ENCODE measurements at regions of chr15 and their contacts with region 1.

Region 1: GRCh38 chr15:52078876-52079700 is 33.5 kb downstream of the BCL2L10 start:
- DNase-seq: peak; percentile 70 to 84 (median 72)
- ATAC-seq: peak; percentile 94
- H3K4me3 ChIP-seq: no peak overlapping the region
- H3K27ac ChIP-seq: no peak overlapping the region
- H3K4me1 ChIP-seq: peaks cover 0 to 9% of the 10 kb centered on the region in 2 experiments; a peak in 3 of 5 replicates
- H3K27me3 ChIP-seq: peaks cover 0 to 3% of the 10 kb centered on the region in 2 experiments; a peak in 2 of 5 replicates
- CTCF ChIP-seq: peak; percentile 84 to 89 (median 85)
- EP300 ChIP-seq: no peak
- POLR2A ChIP-seq: no peak
- RAD21 ChIP-seq: peak; percentile 73 to 87

Region 2: DNA sequence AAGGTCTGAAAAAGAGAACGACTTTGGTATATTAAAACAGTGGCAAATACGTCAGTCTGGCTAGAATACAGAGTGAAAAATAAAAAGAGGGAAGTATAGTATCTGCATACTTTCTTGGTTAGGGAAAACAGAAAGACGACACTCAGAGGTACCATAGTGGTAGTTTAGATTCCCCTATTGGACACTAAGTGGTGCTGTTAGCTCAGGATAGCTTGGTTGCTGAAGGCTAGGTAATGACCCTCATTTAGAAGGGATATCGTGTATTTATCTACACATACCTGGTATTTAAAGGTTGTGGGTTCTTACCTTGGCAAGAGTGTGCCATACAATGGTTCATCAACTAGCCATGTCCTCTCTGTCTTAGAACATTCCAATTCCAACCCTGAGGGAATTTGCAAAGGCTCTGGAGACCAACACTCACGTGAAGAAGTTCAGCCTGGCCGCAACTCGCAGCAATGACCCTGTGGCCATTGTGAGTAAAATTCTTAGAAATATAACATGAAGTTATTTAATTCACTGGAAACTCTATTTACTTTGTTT is 296.7 kb before region 1 on chr15:
- CTCF ChIA-PET with region 1: no interaction called
- POLR2A ChIA-PET with region 1: no interaction called
- in situ Hi-C with region 1: no loop called
- intact Hi-C with region 1: loop called (anchors 10 kb)
- DNase-seq: peak; percentile 41 to 52 (median 45)
- ATAC-seq: peak; percentile 82
- H3K4me3 ChIP-seq: no peak overlapping the region
- H3K27ac ChIP-seq: no peak overlapping the region
- H3K4me1 ChIP-seq: no peaks in the 10 kb centered on the region
- H3K27me3 ChIP-seq: no peaks in the 10 kb centered on the region
- CTCF ChIP-seq: peak; percentile 63 to 75 (median 68)
- EP300 ChIP-seq: no peak
- POLR2A ChIP-seq: no peak
- RAD21 ChIP-seq: peak; percentile 39 to 79; a peak in 3 of 4 replicates

Region 3: DNA sequence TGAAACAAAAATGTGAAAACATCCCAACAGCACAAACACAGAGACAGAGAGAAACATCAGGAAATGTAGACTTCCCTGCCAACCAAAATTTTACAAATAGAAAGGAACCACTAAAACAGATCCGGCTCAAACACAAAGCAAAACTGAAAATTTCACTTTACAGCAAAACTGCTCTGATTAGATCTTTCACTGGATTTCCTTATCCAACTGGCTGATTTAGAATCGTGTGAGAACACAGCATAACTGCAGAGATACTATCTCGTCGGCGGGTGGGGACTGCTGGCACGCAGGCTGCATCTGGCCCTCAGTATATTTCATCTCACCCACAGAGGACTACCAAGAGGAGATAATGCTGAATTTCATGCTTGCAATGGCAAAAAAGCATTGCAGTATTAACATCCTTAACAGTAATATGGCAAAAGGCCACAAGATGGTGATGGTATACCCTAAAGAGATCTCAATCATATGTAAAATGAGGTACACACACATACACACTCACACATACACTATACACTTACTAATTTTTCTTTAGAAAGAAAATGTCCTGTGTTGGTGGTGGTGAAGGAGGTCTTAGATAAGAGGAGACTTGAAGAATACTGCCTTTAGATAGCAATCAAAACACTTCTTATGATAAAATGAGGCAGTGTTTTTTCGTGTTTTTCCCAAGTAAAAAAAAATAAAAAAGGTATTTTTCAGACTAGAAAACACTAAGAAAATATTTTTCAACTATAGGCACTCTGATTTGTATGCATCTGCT is 96.9 kb before region 1 on chr15:
- CTCF ChIA-PET with region 1: interaction called, 6 read pairs
- POLR2A ChIA-PET with region 1: no interaction called
- in situ Hi-C with region 1: loop called (anchors 5 kb)
- intact Hi-C with region 1: loop called (anchors 1 kb)
- DNase-seq: peak in 2 of 4 experiments; percentile 57 to 67
- ATAC-seq: peak; percentile 93
- H3K4me3 ChIP-seq: no peak overlapping the region
- H3K27ac ChIP-seq: peak overlapping the region; percentile 65
- H3K4me1 ChIP-seq: peaks cover 8 to 12% of the 10 kb centered on the region in 2 experiments
- H3K27me3 ChIP-seq: no peaks in the 10 kb centered on the region
- CTCF ChIP-seq: peak; percentile 52 to 85 (median 66); a peak in 5 of 6 replicates
- EP300 ChIP-seq: peak; percentile 64
- POLR2A ChIP-seq: no peak; the same call in 1 of the 2 replicates
- RAD21 ChIP-seq: peak; percentile 87 to 94

Region 4: GRCh38 chr15:52002351-52002750 is 76.7 kb before region 1 on chr15:
- CTCF ChIA-PET with region 1: no interaction called
- POLR2A ChIA-PET with region 1: no interaction called
- in situ Hi-C with region 1: no loop called
- intact Hi-C with region 1: no loop called
- DNase-seq: no peak
- ATAC-seq: no peak
- H3K4me3 ChIP-seq: no peak overlapping the region
- H3K27ac ChIP-seq: no peak overlapping the region
- H3K4me1 ChIP-seq: peaks cover 4 to 20% of the 10 kb centered on the region in 2 experiments; a peak in 4 of 5 replicates
- H3K27me3 ChIP-seq: no peaks in the 10 kb centered on the region
- CTCF ChIP-seq: no peak
- EP300 ChIP-seq: no peak
- POLR2A ChIP-seq: no peak
- RAD21 ChIP-seq: no peak

Region 5: DNA sequence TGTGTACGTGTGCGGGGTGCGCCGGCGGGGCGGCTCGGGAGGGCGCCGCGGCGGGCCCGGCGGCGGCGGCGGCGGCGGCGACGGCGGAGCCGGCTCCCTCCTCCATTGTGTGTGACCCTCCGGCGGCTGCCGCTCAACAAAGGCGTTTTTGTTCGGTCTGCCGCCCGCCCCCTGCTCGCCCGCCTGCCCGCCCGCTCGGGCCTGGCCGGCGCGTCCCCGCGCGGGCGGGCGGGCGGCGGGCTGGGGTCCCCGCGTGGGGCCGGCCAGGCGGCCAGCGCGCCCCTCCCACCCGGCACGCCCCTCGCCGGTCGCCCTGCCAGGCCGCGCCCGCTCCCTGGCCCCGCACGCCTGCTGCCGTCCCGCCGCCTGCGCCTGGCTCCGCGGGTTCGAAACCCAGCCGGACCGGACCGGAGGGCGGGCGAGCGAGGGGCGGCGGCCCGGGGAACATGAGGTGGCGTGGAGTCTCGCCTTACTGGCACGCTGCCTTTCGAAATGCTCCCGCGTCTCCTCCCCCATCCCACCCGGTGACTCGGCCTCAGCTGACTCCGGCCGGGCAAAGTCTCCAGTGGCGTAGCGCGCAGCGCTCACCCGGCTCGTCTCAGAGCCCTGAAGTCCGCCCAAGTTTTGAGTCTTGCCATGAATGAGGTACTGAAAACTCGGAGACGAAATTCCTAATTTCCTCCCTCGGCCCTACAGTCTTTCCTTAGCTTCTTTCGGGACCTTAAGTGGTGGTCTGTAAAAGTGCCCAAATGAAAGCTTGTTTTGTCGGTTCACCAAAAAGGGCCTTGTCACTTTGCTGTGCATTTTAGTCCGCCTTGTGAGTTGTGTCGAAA is 59.5 kb before region 1 on chr15:
- CTCF ChIA-PET with region 1: no interaction called
- POLR2A ChIA-PET with region 1: no interaction called
- in situ Hi-C with region 1: no loop called
- intact Hi-C with region 1: loop called (anchors 5 kb)
- DNase-seq: peak; percentile 85 to 89 (median 86)
- ATAC-seq: peak; percentile 80
- H3K4me3 ChIP-seq: peak overlapping the region; percentile 78
- H3K27ac ChIP-seq: peak overlapping the region; percentile 97
- H3K4me1 ChIP-seq: peaks cover 10 to 30% of the 10 kb centered on the region in 2 experiments; a peak in 4 of 5 replicates
- H3K27me3 ChIP-seq: no peaks in the 10 kb centered on the region
- CTCF ChIP-seq: no peak
- EP300 ChIP-seq: no peak; the same call in 1 of the 2 replicates
- POLR2A ChIP-seq: peak; percentile 67
- RAD21 ChIP-seq: peak in 1 of 2 experiments; percentile 19; a peak in 1 of 4 replicates

Region 6: GRCh38 chr15:52039925-52040781 is 38.9 kb before region 1 on chr15:
- CTCF ChIA-PET with region 1: no interaction called
- POLR2A ChIA-PET with region 1: interaction called, 4 read pairs
- in situ Hi-C with region 1: no loop called
- intact Hi-C with region 1: loop called (anchors 1 kb)
- DNase-seq: peak in 3 of 4 experiments; percentile 16 to 38 (median 31)
- ATAC-seq: peak; percentile 64
- H3K4me3 ChIP-seq: no peak overlapping the region
- H3K27ac ChIP-seq: peak overlapping the region; percentile 24
- H3K4me1 ChIP-seq: peaks cover 19 to 45% of the 10 kb centered on the region in 2 experiments
- H3K27me3 ChIP-seq: no peaks in the 10 kb centered on the region
- CTCF ChIP-seq: no peak
- EP300 ChIP-seq: no peak
- POLR2A ChIP-seq: no peak
- RAD21 ChIP-seq: no peak

Region 7: DNA sequence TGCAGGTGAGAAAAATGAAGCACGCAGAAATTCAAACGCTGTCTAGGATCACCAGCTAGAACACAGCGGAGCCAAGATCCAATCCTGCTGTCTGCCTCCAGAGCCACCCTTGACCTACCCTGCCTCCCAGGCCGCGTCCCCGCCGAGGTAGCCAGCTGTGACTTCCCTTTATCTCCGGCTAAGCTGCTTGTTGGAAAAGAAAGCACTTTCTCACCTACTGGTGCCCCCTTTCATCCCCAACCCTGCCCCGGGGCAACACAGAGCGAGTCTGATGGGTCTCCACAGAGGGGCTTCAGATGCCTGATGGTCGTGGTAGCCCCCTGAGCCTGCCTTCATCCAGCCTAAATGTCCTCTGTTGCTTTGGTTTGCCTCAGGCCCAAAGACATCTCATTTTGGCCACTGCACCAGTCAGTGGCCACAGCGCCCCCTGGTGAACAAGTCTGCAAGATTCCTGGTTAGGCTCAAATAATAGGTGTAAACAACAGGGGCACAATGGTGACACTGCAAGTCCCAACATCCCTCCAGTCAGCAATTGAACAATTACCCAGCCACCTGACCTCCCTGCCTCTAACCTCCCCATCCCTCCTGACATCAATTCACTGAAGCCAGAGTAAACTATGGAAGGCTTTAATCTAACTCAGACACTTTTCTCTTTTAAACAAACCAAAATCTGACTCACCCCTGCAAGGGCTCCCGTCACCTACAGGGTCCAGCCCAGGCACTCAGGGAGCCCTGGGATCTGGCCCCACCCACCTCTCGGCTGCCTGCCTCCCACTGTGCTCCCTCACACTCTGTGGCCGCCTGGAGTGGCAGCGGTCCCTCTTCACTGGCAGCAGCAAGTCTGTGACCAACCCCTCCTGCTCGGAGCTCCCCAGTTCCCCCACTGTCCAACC is 60.8 kb after region 1 on chr15:
- CTCF ChIA-PET with region 1: interaction called, 3 read pairs
- POLR2A ChIA-PET with region 1: no interaction called
- in situ Hi-C with region 1: no loop called
- intact Hi-C with region 1: loop called (anchors 5 kb)
- DNase-seq: peak; percentile 71 to 88 (median 74)
- ATAC-seq: peak; percentile 87
- H3K4me3 ChIP-seq: no peak overlapping the region
- H3K27ac ChIP-seq: no peak overlapping the region
- H3K4me1 ChIP-seq: peaks cover 9 to 31% of the 10 kb centered on the region in 2 experiments; a peak in 4 of 5 replicates
- H3K27me3 ChIP-seq: no peaks in the 10 kb centered on the region
- CTCF ChIP-seq: peak; percentile 90 to 95 (median 91)
- EP300 ChIP-seq: no peak
- POLR2A ChIP-seq: no peak
- RAD21 ChIP-seq: peak; percentile 76 to 86